H1 (cell line): ENCODE measurements at regions of chr2 and their contacts with region 1.

Region 1: DNA sequence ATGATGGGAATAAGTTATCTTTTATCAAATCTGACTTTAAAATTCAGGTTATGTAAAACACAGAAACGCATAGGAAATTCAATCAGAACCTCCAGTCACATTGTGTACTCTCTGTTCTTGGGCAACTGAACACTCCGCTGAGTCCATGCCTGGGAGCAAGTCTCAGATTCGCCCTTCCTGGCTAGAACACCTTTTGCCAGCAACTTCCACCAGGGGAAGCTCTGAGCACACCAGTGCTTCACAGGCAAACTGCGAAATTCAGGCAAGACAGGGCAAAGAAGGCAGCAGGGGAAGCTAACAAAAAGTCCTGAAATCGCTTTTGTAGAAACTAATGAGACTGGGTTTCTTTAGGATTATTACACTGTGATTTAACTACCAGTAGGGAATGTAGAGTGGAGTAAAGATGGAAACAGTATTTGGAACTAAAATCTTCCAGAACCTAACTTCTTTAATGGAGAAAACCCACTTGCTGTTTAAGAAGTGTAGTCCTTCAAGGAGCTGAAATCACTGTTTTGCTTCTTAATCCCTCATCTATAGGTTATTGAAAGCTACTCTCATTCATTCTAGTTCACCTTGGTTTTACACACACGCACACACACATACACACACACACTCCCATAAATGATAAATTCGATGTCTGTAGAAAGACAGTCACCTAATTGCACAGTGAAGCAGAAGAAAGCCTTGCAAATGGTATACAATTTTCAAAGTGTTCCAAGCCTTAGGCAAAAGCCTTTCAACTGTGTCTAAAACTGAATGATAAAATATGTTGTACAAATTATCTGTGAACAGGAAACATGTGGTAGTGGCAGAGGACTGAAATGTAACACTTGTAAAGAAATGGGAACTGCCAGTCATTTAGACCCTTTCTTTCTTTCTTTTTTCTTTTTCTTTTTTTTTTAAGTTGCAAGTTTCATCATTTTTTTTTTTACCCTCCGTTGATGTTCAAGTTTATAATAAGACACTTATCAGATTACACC is 214.5 kb downstream of the TMEM182 start:
- DNase-seq: peak; percentile 36 to 54
- H3K4me3 ChIP-seq: no peak overlapping the region
- H3K27ac ChIP-seq: no peak overlapping the region
- H3K4me1 ChIP-seq: no peaks in the 10 kb centered on the region
- H3K27me3 ChIP-seq: no peaks in the 10 kb centered on the region
- CTCF ChIP-seq: peak; percentile 85 to 94 (median 86)
- EP300 ChIP-seq: no peak
- POLR2A ChIP-seq: no peak
- RAD21 ChIP-seq: peak; percentile 93 to 94

Region 2: DNA sequence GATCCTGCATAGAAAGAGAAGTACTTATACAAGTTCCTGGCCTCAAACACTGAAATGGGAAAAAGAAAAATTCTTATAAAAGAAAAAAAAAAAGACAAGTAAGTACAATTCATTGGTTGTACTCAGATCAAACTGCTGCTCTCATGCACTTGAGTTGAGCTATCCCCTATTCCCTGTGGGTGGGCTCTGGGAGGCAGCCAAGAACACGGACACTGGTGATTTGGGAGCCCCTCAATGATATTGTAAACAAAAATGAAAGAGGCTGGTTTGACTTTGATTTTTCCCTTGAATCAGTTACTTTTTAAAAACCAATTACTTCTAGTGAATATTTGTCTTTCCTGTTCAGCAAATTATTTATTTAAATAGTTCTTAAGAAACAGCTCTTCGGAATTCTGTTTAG is 10.5 kb after region 1 on chr2:
- CTCF ChIA-PET with region 1: interaction called, 20 read pairs
- POLR2A ChIA-PET with region 1: interaction called, 5 read pairs
- DNase-seq: no peak
- H3K4me3 ChIP-seq: no peak overlapping the region
- H3K27ac ChIP-seq: no peak overlapping the region
- H3K4me1 ChIP-seq: no peaks in the 10 kb centered on the region
- H3K27me3 ChIP-seq: no peaks in the 10 kb centered on the region
- CTCF ChIP-seq: no peak
- EP300 ChIP-seq: no peak
- POLR2A ChIP-seq: no peak
- RAD21 ChIP-seq: no peak

Region 3: GRCh38 chr2:103008586-103008985 is 32.3 kb after region 1 on chr2:
- CTCF ChIA-PET with region 1: interaction called, 10 read pairs
- POLR2A ChIA-PET with region 1: no interaction called
- DNase-seq: peak; percentile 23 to 44
- H3K4me3 ChIP-seq: no peak overlapping the region
- H3K27ac ChIP-seq: no peak overlapping the region
- H3K4me1 ChIP-seq: no peaks in the 10 kb centered on the region
- H3K27me3 ChIP-seq: no peaks in the 10 kb centered on the region; a peak in 1 of 7 replicates
- CTCF ChIP-seq: peak; percentile 37 to 53 (median 40); a peak in 3 of 4 replicates
- EP300 ChIP-seq: no peak
- POLR2A ChIP-seq: no peak
- RAD21 ChIP-seq: peak; percentile 42 to 51; a peak in 3 of 4 replicates

Region 4: GRCh38 chr2:103161456-103162289 is 185.4 kb after region 1 on chr2:
- CTCF ChIA-PET with region 1: interaction called, 27 read pairs
- POLR2A ChIA-PET with region 1: no interaction called
- DNase-seq: no peak
- H3K4me3 ChIP-seq: no peak overlapping the region
- H3K27ac ChIP-seq: no peak overlapping the region
- H3K4me1 ChIP-seq: peaks cover 0 to 2% (median 1%) of the 10 kb centered on the region in 4 experiments; a peak in 2 of 7 replicates
- H3K27me3 ChIP-seq: no peaks in the 10 kb centered on the region
- CTCF ChIP-seq: peak in 2 of 3 experiments; percentile 74 to 79; a peak in 3 of 4 replicates
- EP300 ChIP-seq: no peak
- POLR2A ChIP-seq: no peak
- RAD21 ChIP-seq: peak; percentile 92 to 95